Dendritic cell treated with granulocyte-macrophage colony-stimulating factor and Interleukin-4, amounts not matched to agents 40 ng/mL and 50 ng/mL, for 4 days (primary cell): ENCODE measurements at regions of chr19 and their contacts with region 1.

Region 1: GRCh38 chr19:2610637-2611482 is 91.6 kb downstream of the GNG7 start:
- H3K4me3 Mint-ChIP-seq: peak overlapping the region; percentile 78
- H3K27ac Mint-ChIP-seq: peak overlapping the region; percentile 81
- H3K4me1 Mint-ChIP-seq: peaks cover 49% of the 10 kb centered on the region
- H3K27me3 Mint-ChIP-seq: peaks cover 19% of the 10 kb centered on the region

Region 2: DNA sequence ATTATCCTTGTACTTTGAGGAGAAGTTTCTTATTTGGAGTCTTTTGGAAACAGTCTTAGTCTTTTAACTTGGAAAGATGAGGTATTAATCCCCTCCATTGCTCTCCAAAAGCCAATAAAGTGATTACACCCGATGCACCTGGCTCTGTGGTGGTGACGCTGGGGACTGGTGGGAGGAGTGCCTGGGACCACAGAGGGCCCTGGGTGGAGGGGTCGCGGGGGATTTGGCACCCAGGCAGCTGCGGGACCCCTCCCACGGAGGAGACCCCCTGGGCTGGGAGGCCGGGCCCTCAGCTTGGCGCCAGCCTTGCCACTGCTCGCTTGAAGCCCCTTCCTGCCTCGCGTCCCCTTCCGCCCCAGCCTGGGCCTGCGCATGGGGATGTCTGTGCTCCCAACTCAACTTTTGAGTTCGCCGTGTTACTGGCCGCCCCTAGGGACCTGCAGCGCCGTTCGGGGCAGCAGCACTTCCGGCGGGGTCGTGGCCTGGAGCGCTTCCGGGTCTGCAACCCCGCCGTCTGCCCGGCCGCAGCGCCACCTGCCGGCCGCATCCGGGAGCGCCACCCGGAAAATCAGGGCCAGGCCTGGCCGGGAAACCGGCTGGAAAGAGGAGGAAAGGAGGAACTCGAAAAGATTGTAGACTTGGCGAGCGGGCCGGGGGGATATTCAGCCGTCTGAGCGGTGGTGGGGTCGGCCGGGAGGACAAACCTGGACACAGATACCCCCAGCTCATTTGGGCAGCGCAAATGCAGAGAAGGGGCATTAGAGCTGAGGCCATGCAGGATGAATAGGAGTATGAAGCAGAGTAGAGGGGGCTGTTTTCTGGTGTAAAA is 337.3 kb before region 1 on chr19:
- intact Hi-C with region 1: loop called (anchors 10 kb)
- H3K4me3 Mint-ChIP-seq: peak overlapping the region; percentile 90
- H3K27ac Mint-ChIP-seq: peak overlapping the region; percentile 98
- H3K4me1 Mint-ChIP-seq: peaks cover 61% of the 10 kb centered on the region
- H3K27me3 Mint-ChIP-seq: no peaks in the 10 kb centered on the region

Region 3: DNA sequence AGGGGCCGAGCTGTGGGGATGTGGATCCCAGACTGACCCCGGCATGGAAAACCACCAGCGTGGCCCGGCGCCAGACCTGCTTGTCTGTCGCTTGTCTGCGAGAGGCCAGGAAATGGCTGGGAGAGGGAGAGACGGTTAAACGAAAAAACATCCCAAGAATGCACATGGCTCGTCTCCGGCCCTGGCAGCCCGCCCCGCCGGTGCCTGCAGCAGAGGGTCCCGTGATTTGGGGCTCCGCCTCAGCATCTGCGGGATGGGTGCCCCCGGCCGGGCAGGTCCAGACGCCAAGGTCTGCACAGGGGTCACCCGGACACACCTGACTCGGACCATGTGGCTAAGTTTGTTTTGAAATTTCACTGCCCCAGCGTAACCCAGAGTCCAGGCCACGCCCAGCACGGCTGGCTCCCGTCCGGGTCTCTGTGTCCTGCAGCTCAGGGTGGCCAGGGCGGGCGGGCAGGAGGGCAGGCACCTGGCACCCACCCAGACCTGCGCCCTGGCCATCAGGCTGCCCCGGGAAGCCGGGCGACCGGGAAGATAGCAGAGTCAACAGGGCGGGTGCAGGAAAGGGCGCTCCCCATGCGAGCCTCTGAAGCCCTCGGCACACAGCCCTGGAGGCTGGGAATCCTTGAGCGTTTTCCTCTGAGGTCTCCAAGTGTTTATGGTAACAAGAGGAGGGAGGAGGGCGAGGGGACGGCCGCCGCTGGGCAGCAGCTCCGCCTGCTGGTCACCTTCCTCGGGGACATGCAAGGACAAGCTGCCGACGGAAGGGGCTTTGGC is 31.8 kb before region 1 on chr19:
- intact Hi-C with region 1: loop called (anchors 1 kb)
- H3K4me3 Mint-ChIP-seq: peak overlapping the region; percentile 60
- H3K27ac Mint-ChIP-seq: peak overlapping the region; percentile 37
- H3K4me1 Mint-ChIP-seq: peaks cover 25% of the 10 kb centered on the region
- H3K27me3 Mint-ChIP-seq: peaks cover 32% of the 10 kb centered on the region

Region 4: GRCh38 chr19:2624537-2625091 is 13.8 kb after region 1 on chr19:
- intact Hi-C with region 1: no loop called
- H3K4me3 Mint-ChIP-seq: no peak overlapping the region
- H3K27ac Mint-ChIP-seq: peak overlapping the region; percentile 67
- H3K4me1 Mint-ChIP-seq: peaks cover 80% of the 10 kb centered on the region
- H3K27me3 Mint-ChIP-seq: peaks cover 6% of the 10 kb centered on the region

Region 5: GRCh38 chr19:2636897-2637683 is 26.2 kb after region 1 on chr19:
- intact Hi-C with region 1: loop called (anchors 2 kb)
- H3K4me3 Mint-ChIP-seq: peak overlapping the region; percentile 24
- H3K27ac Mint-ChIP-seq: no peak overlapping the region
- H3K4me1 Mint-ChIP-seq: peaks cover 71% of the 10 kb centered on the region
- H3K27me3 Mint-ChIP-seq: peaks cover 14% of the 10 kb centered on the region